ENCODE measurements at regions of chr15 and their contacts with region 1.

Region 1: DNA sequence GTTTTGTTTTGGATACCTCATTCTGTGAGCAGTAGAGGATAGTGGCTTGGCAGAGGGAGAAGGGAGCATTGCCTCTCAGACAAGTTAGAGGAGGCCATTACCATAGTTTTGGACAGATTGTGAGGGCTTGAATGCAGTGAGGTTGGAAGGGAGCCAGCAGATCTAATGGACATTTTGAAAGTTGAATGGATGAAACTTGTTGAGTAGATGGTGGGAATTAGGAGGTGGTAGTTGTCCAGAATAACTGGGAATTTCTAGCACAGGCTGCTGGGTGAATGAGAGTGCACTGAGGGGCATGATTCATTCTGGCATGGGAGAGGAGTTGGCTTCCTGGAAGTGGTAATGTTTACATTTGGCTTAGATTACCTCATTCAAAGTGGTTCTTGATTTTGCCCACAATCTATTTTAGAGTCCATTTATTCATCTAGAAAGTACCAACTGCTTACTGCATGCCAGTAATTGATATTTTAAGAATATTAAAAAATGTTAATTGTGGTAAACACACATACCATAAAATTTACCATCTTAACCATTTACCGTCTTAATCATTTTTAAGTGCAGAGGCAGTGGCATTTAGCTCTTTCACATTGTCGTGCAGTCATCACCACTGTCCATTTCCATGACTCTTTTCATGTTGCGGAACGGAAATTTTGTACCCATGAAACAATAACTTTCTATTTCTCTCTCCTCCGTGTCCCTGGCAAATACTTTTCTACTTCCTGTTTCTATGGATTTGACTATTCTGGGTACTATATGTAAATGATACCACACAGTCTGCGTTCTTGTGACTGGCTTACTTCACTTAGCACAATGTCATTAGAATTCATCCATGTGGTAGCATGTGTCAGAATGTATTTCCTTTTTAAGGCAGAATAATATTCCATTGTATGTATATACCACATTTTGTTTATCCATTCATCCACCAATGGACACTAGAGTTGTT is 27.7 kb downstream of the AKAP13 start:
- DNase-seq: peak; percentile 61
- ATAC-seq: peak; percentile 64
- H3K4me3 Mint-ChIP-seq: peak overlapping the region; percentile 32
- H3K27ac Mint-ChIP-seq: peak overlapping the region; percentile 93
- H3K4me1 Mint-ChIP-seq: peaks cover 86% of the 10 kb centered on the region
- H3K27me3 Mint-ChIP-seq: no peaks in the 10 kb centered on the region

Region 2: GRCh38 chr15:84633311-84634227 is 774.5 kb before region 1 on chr15:
- CTCF ChIA-PET with region 1: no interaction called
- POLR2A ChIA-PET with region 1: no interaction called
- intact Hi-C with region 1: loop called in 1 of 2 experiments (anchors 10 kb)
- DNase-seq: peak; percentile 87
- ATAC-seq: peak; percentile 57
- H3K4me3 Mint-ChIP-seq: peak overlapping the region; percentile 93
- H3K27ac Mint-ChIP-seq: peak overlapping the region; percentile 99
- H3K4me1 Mint-ChIP-seq: peaks cover 45% of the 10 kb centered on the region
- H3K27me3 Mint-ChIP-seq: no peaks in the 10 kb centered on the region

Region 3: GRCh38 chr15:85296615-85297402 is 111.3 kb before region 1 on chr15:
- CTCF ChIA-PET with region 1: interaction called, 24 read pairs
- POLR2A ChIA-PET with region 1: no interaction called
- intact Hi-C with region 1: no loop called
- DNase-seq: peak; percentile 79
- ATAC-seq: peak; percentile 100
- H3K4me3 Mint-ChIP-seq: no peak overlapping the region
- H3K27ac Mint-ChIP-seq: peak overlapping the region; percentile 38
- H3K4me1 Mint-ChIP-seq: peaks cover 11% of the 10 kb centered on the region
- H3K27me3 Mint-ChIP-seq: peaks cover 1% of the 10 kb centered on the region

Region 4: DNA sequence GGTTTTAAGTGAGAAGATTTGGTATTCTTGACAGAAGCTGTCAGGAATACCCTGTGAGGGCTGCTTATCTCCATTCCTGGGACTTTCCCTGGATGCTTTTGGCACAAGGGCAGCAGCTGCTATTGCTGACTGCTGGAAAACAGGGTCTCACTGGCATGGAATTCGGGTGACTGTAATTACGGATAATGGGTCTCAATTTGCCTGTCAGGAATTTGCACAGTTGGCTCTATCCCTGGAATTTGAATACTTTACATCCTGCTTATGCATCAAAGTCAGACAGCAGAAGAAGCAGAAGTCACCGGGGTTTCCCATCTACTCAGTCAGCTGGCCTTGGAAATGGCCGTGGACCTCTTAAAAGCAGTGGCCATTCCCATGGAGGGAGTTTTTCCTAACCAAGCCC is 53.6 kb before region 1 on chr15:
- CTCF ChIA-PET with region 1: no interaction called
- POLR2A ChIA-PET with region 1: no interaction called
- intact Hi-C with region 1: loop called in 1 of 2 experiments (anchors 1 kb)
- DNase-seq: no peak
- ATAC-seq: no peak
- H3K4me3 Mint-ChIP-seq: no peak overlapping the region
- H3K27ac Mint-ChIP-seq: no peak overlapping the region
- H3K4me1 Mint-ChIP-seq: peaks cover 10% of the 10 kb centered on the region
- H3K27me3 Mint-ChIP-seq: peaks cover 3% of the 10 kb centered on the region

Region 5: GRCh38 chr15:85443593-85444087 is 35.6 kb after region 1 on chr15:
- CTCF ChIA-PET with region 1: interaction called, 4 read pairs
- POLR2A ChIA-PET with region 1: interaction called, 3 read pairs
- intact Hi-C with region 1: loop called (anchors 1 to 5 kb)
- DNase-seq: peak; percentile 49
- ATAC-seq: peak; percentile 81
- H3K4me3 Mint-ChIP-seq: peak overlapping the region; percentile 10
- H3K27ac Mint-ChIP-seq: peak overlapping the region; percentile 41
- H3K4me1 Mint-ChIP-seq: peaks cover 48% of the 10 kb centered on the region
- H3K27me3 Mint-ChIP-seq: no peaks in the 10 kb centered on the region

Region 6: GRCh38 chr15:85456798-85457197 is 48.7 kb after region 1 on chr15:
- CTCF ChIA-PET with region 1: no interaction called
- POLR2A ChIA-PET with region 1: no interaction called
- intact Hi-C with region 1: no loop called
- DNase-seq: no peak
- ATAC-seq: peak; percentile 19
- H3K4me3 Mint-ChIP-seq: no peak overlapping the region
- H3K27ac Mint-ChIP-seq: no peak overlapping the region
- H3K4me1 Mint-ChIP-seq: peaks cover 60% of the 10 kb centered on the region
- H3K27me3 Mint-ChIP-seq: no peaks in the 10 kb centered on the region

Region 7: GRCh38 chr15:85646538-85647091 is 238.5 kb after region 1 on chr15:
- CTCF ChIA-PET with region 1: interaction called, 3 read pairs
- POLR2A ChIA-PET with region 1: no interaction called
- intact Hi-C with region 1: loop called in 1 of 2 experiments (anchors 5 kb)
- DNase-seq: peak; percentile 48
- ATAC-seq: peak; percentile 84
- H3K4me3 Mint-ChIP-seq: no peak overlapping the region
- H3K27ac Mint-ChIP-seq: peak overlapping the region; percentile 90
- H3K4me1 Mint-ChIP-seq: peaks cover 64% of the 10 kb centered on the region
- H3K27me3 Mint-ChIP-seq: no peaks in the 10 kb centered on the region